ENCODE measurements at regions of chrX and their contacts with region 1.

Region 1: GRCh38 chrX:120477453-120477852 is 8.4 kb upstream of the LAMP2 start:
- DNase-seq: no peak
- H3K4me3 Mint-ChIP-seq: no peak overlapping the region
- H3K27ac Mint-ChIP-seq: no peak overlapping the region
- H3K4me1 Mint-ChIP-seq: no peaks in the 10 kb centered on the region
- H3K27me3 Mint-ChIP-seq: peaks cover 13% of the 10 kb centered on the region
- CTCF ChIP-seq: no peak

Region 2: DNA sequence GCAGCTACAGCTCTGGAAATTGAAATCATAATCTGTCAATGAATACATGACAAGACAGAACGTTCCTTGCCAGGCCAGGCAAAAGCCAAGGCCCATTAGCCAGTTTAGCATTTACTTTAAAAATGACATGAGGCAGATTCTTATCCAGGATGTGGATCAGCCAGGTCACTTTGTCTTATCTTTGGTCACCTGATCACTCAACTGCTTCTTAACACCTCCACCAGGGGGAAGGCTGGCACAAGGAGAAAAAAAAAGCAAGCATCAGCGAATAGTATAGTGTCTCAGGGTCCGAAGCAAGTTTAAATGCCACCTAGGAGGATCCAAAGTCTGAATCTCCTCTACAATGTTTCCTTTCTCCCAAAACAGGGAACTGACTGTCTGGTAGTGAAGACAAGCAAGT is 96.8 kb before region 1 on chrX:
- CTCF ChIA-PET with region 1: interaction called, 12 read pairs
- POLR2A ChIA-PET with region 1: no interaction called
- intact Hi-C with region 1: no loop called
- DNase-seq: peak; percentile 68
- H3K4me3 Mint-ChIP-seq: no peak overlapping the region
- H3K27ac Mint-ChIP-seq: no peak overlapping the region
- H3K4me1 Mint-ChIP-seq: no peaks in the 10 kb centered on the region
- H3K27me3 Mint-ChIP-seq: peaks cover 51% of the 10 kb centered on the region
- CTCF ChIP-seq: peak; percentile 42

Region 3: DNA sequence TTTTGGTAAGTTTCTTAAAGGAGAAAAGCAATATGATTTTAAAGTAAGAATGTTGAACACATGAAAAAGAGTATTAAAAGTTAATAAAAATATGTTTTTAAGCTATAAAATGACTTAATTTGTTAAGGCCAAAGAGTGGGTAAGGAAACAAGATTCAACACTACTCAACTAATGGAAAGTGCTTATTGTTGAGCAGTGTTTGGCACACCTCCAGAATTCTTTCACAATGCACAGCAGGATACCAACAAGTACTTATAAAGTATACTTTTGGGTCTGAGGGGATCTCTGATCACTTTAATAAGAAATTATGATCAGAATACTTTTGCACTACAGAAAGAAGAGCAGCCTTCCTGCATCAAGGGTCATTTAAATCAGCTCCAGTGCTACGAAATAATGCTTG is 14.2 kb before region 1 on chrX:
- CTCF ChIA-PET with region 1: interaction called, 10 read pairs
- POLR2A ChIA-PET with region 1: interaction called, 3 read pairs
- intact Hi-C with region 1: no loop called
- DNase-seq: peak; percentile 80
- H3K4me3 Mint-ChIP-seq: no peak overlapping the region
- H3K27ac Mint-ChIP-seq: peak overlapping the region; percentile 42
- H3K4me1 Mint-ChIP-seq: peaks cover 36% of the 10 kb centered on the region
- H3K27me3 Mint-ChIP-seq: no peaks in the 10 kb centered on the region
- CTCF ChIP-seq: no peak

Measured in MCF 10A (cell line).